B cell (primary cell): ENCODE measurements at regions of chr10 and their contacts with region 1.

Region 1: GRCh38 chr10:62116896-62117295 is 151.7 kb downstream of the RTKN2 start:
- DNase-seq: no peak
- ATAC-seq: no peak
- H3K4me3 ChIP-seq: no peak overlapping the region
- H3K4me3 Mint-ChIP-seq: no peak overlapping the region
- H3K27ac ChIP-seq: no peak overlapping the region
- H3K27ac Mint-ChIP-seq: no peak overlapping the region
- H3K4me1 ChIP-seq: peaks cover 0 to 4% of the 10 kb centered on the region in 2 donors
- H3K4me1 Mint-ChIP-seq: peaks cover 16% of the 10 kb centered on the region
- H3K27me3 ChIP-seq: no peaks in the 10 kb centered on the region
- H3K27me3 Mint-ChIP-seq: no peaks in the 10 kb centered on the region
- CTCF ChIP-seq: no peak

Region 2: DNA sequence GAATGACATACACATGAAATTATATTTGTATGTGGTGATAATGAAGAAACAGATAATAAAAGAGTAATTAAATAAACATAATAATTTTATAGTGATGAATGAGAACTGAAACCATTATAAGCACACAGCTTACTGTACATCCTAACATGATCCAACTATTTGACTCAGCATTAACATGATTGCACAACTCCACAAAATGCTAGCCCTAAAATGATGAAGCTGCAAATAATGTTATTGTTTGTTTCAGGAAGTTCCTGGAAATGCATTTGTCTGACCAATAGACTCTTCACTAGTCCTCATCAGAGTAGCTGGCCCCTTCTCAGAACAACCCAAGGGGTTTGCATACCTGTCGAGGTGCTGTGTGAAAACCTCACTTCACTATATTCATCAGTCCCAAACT is 36.3 kb after region 1 on chr10:
- CTCF ChIA-PET with region 1: no interaction called
- POLR2A ChIA-PET with region 1: no interaction called
- intact Hi-C with region 1: loop called (anchors 5 kb)
- DNase-seq: no peak
- ATAC-seq: no peak
- H3K4me3 ChIP-seq: no peak overlapping the region
- H3K4me3 Mint-ChIP-seq: no peak overlapping the region
- H3K27ac ChIP-seq: no peak overlapping the region
- H3K27ac Mint-ChIP-seq: no peak overlapping the region
- H3K4me1 ChIP-seq: peaks cover 6 to 7% of the 10 kb centered on the region in 2 donors
- H3K4me1 Mint-ChIP-seq: peaks cover 6% of the 10 kb centered on the region
- H3K27me3 ChIP-seq: no peaks in the 10 kb centered on the region
- H3K27me3 Mint-ChIP-seq: no peaks in the 10 kb centered on the region
- CTCF ChIP-seq: no peak